ENCODE measurements at regions of chr6 and their contacts with region 1.

Region 1: GRCh38 chr6:113936093-113936934 is 34.6 kb downstream of the HDAC2 start:
- DNase-seq: peak; percentile 53
- H3K4me3 ChIP-seq: no peak overlapping the region
- H3K27ac ChIP-seq: peak overlapping the region in 1 of 2 experiments; percentile 1; a peak in 1 of 4 replicates
- H3K4me1 ChIP-seq: no peaks in the 10 kb centered on the region; a peak in 1 of 4 replicates
- H3K27me3 ChIP-seq: no peaks in the 10 kb centered on the region
- CTCF ChIP-seq: peak; percentile 87
- EP300 ChIP-seq: no peak
- RAD21 ChIP-seq: peak; percentile 71

Region 2: GRCh38 chr6:113960795-113961194 is 24.5 kb after region 1 on chr6:
- CTCF ChIA-PET with region 1: interaction called, 10 read pairs
- POLR2A ChIA-PET with region 1: no interaction called
- DNase-seq: no peak
- H3K4me3 ChIP-seq: no peak overlapping the region
- H3K27ac ChIP-seq: no peak overlapping the region
- H3K4me1 ChIP-seq: peaks cover 0 to 10% of the 10 kb centered on the region in 2 experiments; a peak in 2 of 4 replicates
- H3K27me3 ChIP-seq: no peaks in the 10 kb centered on the region
- CTCF ChIP-seq: no peak
- EP300 ChIP-seq: no peak
- RAD21 ChIP-seq: no peak